ENCODE measurements at regions of chr7 and their contacts with region 1.

Region 1: DNA sequence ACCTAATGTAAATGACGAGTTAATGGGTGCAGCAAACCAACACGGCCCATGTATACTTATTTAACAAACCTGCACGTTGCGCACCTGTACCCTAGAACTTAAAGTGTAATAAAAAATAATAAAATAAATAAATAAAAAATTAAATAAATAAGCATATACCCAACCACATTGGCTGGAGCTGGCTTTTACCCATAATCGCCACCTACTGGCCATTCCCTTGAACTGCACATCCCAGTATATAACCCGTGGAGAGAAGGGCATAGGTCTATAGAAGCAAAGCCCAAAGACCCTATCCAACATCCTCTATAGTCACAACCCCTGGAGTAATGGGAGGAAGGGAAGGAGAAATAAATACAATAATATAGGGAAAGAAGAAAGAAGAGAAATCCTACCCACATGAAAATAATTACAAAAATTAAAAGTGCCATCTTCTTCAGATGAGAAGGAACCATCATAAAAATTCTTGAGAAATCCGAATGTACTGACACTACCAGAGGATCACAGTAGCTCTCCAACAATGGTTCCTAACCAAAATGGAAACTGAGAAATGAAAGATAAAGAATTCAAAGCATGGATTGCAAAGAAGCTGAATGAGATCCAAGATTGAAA is 65.6 kb downstream of the TWIST1 start:
- DNase-seq: peak; percentile 74
- H3K4me3 Mint-ChIP-seq: no peak overlapping the region
- H3K27ac Mint-ChIP-seq: no peak overlapping the region
- H3K4me1 Mint-ChIP-seq: peaks cover 2% of the 10 kb centered on the region
- H3K27me3 Mint-ChIP-seq: no peaks in the 10 kb centered on the region

Region 2: DNA sequence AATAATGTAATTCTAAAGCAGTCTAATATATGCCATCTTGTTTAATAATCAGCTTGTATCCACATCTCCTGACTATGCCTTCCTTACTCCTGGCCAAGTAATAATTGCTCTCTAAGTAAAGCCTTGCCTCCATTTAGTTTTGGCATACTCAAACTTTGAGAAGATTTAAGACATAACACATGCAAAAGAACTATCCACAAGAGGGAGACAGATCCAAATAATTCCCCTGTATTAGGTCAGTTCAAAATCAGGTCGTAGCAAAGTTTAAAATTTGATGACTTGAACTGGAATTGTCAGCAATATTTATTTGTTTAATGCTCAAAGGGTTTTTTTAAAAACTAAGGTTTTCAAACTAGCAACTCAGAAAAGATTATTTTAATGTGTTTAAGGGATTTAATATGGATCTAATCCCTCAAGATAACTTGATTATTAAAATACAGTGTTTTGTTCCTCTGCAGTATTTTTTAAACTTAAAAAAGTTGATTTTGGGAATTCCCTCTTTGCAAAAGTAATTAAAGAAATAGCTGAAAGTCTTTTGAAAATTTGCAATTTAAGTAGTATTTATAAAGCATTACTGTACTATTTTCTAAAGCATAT is 461.0 kb before region 1 on chr7:
- intact Hi-C with region 1: loop called (anchors 10 kb)
- DNase-seq: no peak
- H3K4me3 Mint-ChIP-seq: no peak overlapping the region
- H3K27ac Mint-ChIP-seq: no peak overlapping the region
- H3K4me1 Mint-ChIP-seq: no peaks in the 10 kb centered on the region
- H3K27me3 Mint-ChIP-seq: peaks cover 2% of the 10 kb centered on the region

Region 3: DNA sequence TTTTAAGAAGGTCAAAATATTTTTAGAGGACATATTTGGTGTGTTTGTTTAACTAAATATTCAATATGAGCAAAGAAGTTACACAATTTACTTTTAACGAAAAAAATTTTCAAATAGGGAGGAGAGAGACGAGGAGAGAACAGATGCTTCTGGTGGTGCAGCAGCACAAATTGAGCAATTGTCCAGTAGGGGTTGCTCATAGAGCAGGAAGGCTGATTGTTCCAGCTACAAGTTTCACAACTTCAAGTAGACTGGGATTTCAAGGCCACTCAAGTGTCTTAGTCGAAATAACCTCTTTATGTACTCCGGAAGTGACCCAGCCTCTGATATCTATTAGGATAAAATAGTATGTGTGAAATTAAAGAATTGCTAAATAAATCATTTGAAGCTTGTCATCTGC is 358.5 kb before region 1 on chr7:
- intact Hi-C with region 1: loop called (anchors 10 kb)
- DNase-seq: no peak
- H3K4me3 Mint-ChIP-seq: no peak overlapping the region
- H3K27ac Mint-ChIP-seq: no peak overlapping the region
- H3K4me1 Mint-ChIP-seq: no peaks in the 10 kb centered on the region
- H3K27me3 Mint-ChIP-seq: no peaks in the 10 kb centered on the region

Region 4: DNA sequence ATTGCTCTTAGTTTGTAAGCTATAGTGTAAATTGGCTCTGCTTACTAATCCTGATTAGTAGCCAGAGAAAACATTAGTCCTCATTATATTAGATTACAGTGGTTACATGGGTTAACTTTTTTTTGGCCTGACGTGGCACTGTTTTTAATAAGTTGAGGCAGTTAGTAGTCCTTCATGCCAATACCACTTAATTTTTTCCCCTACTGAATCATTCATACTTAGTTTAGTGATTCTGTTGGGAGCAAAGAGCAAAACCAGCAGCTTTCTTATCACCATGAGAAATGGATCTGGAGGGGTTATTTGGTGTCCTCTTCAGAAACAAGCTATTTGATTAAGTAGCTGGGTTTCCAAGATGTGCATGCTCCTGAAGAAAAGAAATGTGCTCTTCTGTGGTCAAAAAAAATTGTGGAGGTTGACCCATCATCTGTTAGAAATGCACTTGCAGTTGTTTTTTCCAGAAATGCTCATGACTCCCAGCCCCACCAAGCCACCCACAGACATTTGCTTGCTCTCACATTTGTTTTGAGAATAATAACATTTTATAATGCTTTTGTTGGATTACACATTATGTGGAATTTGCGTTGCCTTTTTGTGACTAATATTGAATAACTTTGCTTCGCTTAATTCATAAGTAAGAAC is 297.8 kb before region 1 on chr7:
- intact Hi-C with region 1: loop called (anchors 5 kb)
- DNase-seq: no peak
- H3K4me3 Mint-ChIP-seq: no peak overlapping the region
- H3K27ac Mint-ChIP-seq: no peak overlapping the region
- H3K4me1 Mint-ChIP-seq: no peaks in the 10 kb centered on the region
- H3K27me3 Mint-ChIP-seq: no peaks in the 10 kb centered on the region

Measured in activated CD4-positive, alpha-beta T cell treated with anti-CD3 and anti-CD28 coated beads, Interleukin-2, amount 10 ng/mL, durations not matched to agents 24 days and 14 days (primary cell).